Dorsolateral prefrontal cortex (tissue), 120 donors: ENCODE measurements at regions of chr11 and their contacts with region 1.

Region 1: GRCh38 chr11:119373921-119374631 is 7.4 kb downstream of the USP2 start:
- DNase-seq: peak; percentile 72 to 95 (median 88)
- H3K4me3 ChIP-seq: peak overlapping the region in 19 of 59 donors; percentile 14 to 70 (median 58)
- H3K27ac ChIP-seq: peak overlapping the region; percentile 75 to 100 (median 99)
- H3K27me3 ChIP-seq: no peaks in the 10 kb centered on the region
- CTCF ChIP-seq: peak; percentile 78 to 97 (median 94)

Region 2: DNA sequence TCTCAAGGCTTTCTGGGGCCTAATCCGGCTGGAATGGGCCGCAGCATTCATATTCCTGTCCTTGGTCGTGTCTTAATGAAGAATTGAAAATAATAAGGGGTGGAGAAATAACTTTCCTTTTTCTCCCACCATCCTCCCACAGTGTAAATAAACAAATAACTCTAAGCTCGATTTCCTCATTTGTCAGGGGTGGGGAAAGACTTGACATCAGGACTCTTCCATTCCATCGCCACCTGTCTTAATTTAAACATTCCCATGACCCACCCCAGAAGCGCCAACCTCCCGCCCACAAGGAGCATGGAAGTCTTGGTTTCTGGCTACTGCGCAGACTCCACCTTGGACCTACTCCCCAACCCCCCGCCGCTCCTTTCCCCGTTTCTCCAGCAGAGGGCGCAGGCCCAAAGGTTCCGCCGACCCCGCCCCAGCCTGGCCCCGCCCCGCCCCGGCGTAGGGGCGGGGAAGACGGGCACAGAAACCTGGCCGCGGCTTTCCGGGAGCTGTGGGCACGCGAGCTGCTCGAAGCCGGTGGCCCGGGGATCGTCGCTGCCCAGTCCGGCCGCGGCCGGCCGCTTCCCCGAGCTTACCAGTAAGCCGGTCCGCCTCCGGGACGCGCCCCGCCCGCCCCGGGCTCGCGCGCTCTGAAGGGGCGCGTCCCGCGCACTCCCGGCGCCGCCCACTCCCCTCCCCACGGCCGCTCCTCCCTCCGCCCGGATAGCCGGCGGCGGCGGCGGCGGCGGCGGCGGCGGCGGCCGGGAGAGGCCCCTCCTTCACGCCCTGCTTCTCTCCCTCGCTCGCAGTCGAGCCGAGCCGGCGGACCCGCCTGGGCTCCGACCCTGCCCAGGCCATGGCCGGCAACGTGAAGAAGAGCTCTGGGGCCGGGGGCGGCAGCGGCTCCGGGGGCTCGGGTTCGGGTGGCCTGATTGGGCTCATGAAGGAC is 168.2 kb before region 1 on chr11 and contains the start of gene CBL:
- intact Hi-C with region 1: loop called in 1 of 2 experiments (anchors 5 kb)
- DNase-seq: peak; percentile 86 to 97 (median 92)
- H3K4me3 ChIP-seq: peak within 1 kb of the TSS; percentile 48 to 99 (median 92)
- H3K27ac ChIP-seq: peak within 1 kb of the TSS; percentile 49 to 97 (median 91)
- H3K27me3 ChIP-seq: no peaks in the 10 kb centered on the region
- CTCF ChIP-seq: peak; percentile 23 to 97 (median 86)
- total RNA-seq, gene CBL: 22.9 to 40.0 (median 30.5) TPM

Region 3: DNA sequence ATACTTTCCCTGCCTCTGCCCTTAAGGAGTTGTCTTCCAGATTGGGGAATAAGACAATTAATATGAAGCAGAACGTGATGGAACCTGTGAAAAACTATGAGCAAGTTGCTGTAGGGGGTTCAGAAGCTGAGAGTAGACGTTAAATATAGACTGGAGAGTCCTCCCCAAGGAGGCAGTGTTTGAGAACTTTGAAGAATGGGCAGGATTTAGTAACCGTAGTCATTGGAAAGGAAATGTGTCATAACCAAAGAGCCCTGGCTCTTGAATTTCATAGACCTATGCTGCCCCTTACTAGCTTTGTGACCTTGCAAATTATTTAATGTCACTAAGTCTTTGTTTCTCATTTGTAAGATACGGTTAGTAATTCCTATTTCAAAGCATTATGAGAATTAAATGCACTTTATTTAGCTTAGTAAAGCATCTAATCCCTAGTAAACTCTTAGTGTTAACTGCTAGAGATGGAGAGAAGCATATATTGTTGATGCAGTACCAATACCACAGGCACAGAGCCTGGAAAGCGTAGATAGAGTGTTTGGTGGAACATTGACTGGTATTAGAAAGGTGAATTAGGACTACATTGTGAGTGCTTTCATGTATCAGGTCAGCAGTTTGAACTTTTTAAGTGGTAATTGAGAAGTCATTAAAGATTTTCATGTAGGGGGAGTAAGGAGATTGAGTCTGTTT is 111.3 kb before region 1 on chr11:
- intact Hi-C with region 1: no loop called
- DNase-seq: no peak
- H3K4me3 ChIP-seq: no peak overlapping the region
- H3K27ac ChIP-seq: peak overlapping the region in 2 of 59 donors; percentile 13 to 24
- H3K27me3 ChIP-seq: no peaks in the 10 kb centered on the region
- CTCF ChIP-seq: no peak

Region 4: DNA sequence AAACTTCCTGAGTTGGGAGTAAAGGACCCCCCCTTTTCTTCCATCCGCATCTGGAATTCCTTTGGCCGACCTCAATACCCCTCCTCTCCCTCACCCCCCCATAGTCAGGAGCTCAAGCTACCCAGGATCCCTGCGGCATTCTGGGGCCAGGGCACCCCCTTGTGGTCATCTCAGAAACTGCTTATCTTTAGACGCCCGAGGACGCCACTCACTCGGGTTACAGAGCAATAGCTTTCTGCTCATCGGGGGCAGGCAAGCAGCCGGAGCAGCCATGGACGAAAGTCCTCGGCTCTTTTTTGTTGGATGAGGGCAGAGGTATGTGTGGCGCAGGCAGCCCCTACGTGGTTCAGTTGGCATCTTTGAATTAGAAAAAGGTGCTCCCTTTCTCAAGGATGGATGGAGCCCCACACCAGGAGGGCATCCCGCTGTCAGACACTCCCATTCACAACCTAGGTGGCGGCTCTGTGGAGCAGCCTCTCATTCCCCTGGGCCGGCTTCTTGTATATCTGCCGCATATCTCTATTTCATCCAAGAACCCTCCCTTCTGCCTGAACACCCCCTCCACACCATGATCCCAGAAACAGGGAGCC is 35.7 kb before region 1 on chr11:
- intact Hi-C with region 1: loop called (anchors 1 to 5 kb)
- DNase-seq: peak in 9 of 10 donors; percentile 64 to 88 (median 79)
- H3K4me3 ChIP-seq: peak overlapping the region in 34 of 59 donors; percentile 1 to 76 (median 64)
- H3K27ac ChIP-seq: peak overlapping the region in 37 of 59 donors; percentile 3 to 90 (median 49)
- H3K27me3 ChIP-seq: peaks cover 0 to 5% (median 0%) of the 10 kb centered on the region in 45 donors
- CTCF ChIP-seq: peak; percentile 41 to 85 (median 77)

Region 5: DNA sequence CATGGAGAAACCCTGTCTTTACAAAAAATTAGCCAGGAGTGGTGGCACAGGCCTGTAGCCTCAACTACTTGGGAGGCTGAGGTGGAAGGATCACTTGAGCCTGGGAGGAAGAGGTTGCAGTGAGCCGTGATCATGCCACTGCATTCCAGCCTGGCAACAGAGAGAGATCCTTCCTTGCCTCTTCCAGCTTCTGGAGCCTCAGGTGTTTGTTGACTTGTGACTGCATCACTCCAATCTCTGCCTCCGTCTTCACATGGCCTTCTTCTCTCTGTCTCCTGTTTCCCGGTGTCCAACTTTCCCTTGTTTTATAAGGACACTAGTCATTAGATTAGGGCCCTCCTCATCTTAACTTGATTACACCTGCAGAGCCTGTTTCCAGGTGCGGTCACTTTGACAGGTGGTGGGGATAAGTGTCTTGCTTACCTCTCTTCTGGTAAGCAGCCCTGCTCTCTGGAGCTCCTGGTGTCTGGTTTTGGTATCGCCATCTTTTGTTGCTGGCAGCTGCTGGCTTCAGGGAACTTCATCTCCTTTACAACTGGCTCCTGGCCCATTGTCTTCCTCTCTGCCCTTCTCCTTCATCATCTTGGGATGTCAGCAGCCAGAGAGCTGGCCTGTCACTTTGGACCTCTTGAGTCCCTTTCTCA is 15.7 kb after region 1 on chr11:
- intact Hi-C with region 1: no loop called
- DNase-seq: no peak
- H3K4me3 ChIP-seq: no peak overlapping the region
- H3K27ac ChIP-seq: no peak overlapping the region
- H3K27me3 ChIP-seq: no peaks in the 10 kb centered on the region
- CTCF ChIP-seq: peak in 1 of 56 donors; percentile 14

Region 6: DNA sequence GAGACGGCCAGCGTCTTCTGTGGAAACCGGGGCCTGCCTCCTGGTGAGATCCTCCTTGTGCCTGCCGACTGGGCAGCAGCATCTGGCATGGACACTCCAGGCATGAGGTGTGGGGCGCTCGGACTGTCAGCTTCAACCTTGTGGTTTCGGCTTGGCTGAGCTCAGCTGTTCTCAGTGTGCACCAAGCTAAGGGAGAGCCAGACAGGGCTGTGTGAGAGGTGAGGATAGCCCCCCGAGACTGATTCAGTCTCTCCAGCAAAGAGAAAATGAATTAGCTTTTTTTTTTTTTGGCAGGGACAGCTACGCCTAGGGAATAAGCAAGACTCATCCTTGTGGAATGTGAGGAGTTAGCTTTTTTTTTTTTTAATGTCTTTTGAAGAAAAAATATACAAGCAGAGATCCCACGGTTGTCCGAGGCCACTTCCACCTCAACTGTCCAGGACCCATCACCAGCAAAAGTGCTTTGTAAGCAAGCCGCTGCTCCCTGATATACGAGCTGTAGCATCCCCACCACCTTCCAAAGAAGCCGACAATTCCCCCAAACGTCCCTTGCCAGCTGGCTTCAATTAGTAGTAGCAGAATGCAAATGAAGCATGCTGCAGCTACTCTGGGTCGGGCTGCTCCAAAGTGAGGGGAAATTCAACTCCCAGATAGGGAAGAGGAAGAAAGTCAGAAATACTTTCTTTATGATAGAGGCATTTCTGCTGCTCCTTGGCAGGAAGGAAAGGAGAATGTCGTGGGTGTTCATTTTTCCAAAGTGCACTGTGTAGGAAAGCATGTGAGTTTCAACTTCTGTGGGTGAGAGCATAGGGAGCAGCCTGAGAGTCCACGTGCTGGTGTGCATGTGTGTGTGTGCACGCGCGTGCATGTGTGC is 58.6 kb after region 1 on chr11:
- intact Hi-C with region 1: no loop called
- DNase-seq: peak in 2 of 10 donors; percentile 26 to 49
- H3K4me3 ChIP-seq: peak overlapping the region in 16 of 59 donors; percentile 1 to 37 (median 16)
- H3K27ac ChIP-seq: peak overlapping the region in 42 of 59 donors; percentile 14 to 82 (median 52)
- H3K27me3 ChIP-seq: no peaks in the 10 kb centered on the region
- CTCF ChIP-seq: no peak

Region 7: GRCh38 chr11:119474682-119475596 is 100.9 kb after region 1 on chr11:
- intact Hi-C with region 1: loop called (anchors 2 to 5 kb)
- DNase-seq: peak; percentile 45 to 88 (median 76)
- H3K4me3 ChIP-seq: no peak overlapping the region
- H3K27ac ChIP-seq: peak overlapping the region in 14 of 59 donors; percentile 2 to 79 (median 50)
- H3K27me3 ChIP-seq: no peaks in the 10 kb centered on the region
- CTCF ChIP-seq: peak; percentile 85 to 99 (median 95)